Posterior vena cava (tissue), 2 donors: ENCODE measurements at regions of chr2 and their contacts with region 1.

Region 1: DNA sequence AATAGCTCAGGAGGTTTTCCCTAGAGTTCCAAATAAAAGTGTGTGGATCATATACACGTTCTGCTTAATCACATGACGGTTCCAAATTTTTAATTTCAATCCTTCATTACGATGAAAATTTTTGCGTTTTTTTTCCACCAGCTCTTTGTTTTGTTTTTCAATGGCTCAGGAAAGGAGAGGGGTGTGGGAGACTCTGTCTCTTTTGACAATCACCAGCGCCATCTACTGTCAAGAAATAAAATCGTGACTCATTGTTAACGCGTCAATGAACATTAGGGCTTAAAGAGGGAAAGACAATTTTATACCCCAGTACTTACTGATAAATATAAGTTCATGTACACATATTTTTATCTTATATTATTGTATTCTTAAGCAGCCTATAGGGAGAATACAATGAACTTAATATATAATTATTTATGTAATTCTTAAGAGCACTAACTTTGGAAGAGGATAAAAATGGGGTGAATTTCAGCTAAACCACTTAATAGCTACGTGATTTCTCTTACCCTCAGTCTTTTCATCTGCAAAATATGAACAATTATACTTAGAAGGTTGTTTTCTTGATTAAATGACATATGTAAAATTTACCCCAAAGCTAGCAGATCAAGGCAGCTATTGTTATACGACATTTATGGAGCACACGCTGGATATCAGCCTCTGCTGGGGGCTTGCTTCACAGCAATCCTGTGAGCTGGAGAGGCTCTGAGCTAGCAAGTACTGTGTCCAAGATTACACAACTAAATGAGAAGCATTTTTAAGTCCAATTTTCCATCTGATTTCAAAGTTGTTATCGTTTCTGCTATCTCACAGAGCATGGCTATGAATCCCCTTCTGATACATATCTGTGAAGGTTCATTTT is 47.4 kb upstream of the RMDN2 start:
- DNase-seq: no peak

Region 2: GRCh38 chr2:37414470-37414949 is 463.2 kb before region 1 on chr2:
- intact Hi-C with region 1: loop called (anchors 5 to 10 kb)
- DNase-seq: no peak

Region 3: DNA sequence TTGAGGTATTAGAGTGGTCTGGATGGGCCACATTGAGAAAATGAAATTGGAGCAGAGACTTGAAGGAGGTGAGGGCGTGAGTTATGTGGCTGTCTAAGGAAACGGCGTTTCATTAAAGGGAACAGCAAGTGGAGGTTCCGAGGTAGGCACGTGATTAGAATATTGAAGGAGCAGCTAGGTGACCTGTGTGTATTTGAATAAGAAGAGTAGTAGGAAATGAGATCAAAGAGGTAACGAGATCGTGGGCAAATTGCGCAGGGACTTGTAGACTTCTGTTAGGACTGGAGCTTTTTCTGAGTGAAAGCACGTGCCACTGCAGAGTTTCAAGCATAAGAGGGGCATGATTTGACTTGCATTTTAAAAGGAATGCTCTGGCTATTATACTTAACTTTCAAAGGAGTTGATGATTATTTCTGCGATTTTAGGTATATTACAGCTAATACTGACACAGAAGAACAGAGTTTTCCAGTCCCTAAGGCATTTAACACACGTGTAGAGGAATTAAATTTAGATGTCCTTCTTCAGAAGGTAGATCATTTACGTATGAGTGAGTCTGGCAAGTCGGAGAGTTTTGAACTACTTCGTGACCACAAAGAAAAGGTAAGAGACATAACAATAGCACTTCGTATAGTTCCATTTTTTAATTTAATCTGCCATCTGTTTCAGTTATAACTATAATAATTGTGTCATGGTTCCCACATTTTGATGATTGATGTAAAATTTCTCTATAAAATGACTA is 96.1 kb after region 1 on chr2:
- intact Hi-C with region 1: no loop called
- DNase-seq: no peak

Region 4: GRCh38 chr2:38128653-38129052 is 251.0 kb after region 1 on chr2:
- intact Hi-C with region 1: no loop called
- DNase-seq: no peak